Right ventricle myocardium superior (tissue), 1 donor: ENCODE measurements at regions of chr2 and their contacts with region 1.

Region 1: GRCh38 chr2:165293440-165294353 is 54.5 kb downstream of the SCN2A start:
- DNase-seq: no peak
- ATAC-seq: peak; percentile 99

Region 2: DNA sequence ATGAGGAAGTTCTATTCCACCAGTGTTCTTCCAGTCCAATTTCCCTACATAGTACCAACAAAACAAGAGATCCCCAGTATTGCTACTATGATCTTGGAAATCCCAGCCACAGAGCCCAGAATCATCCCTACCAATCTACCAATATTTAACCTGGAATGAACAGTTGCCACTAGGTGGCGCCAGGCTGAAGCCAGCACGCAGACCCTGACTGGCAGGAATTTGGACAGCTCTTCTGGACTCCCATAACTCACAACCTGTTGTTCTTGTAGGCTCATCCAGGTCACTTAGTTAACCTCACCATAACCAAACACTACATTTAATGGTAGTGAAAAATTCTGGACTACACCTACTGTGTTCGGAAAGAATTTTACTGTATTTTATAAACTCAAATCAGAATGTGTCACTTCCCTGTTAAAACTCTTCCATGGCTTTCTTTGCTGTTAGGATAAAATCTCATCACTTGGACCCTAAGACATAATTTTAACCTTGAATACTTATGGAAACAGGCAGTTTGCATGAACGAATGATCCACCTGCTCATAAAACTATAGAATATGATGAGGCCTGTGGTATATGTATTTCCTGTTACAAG is 278.6 kb before region 1 on chr2:
- intact Hi-C with region 1: loop called (anchors 10 kb)
- DNase-seq: peak; percentile 70
- ATAC-seq: peak; percentile 86

Region 3: GRCh38 chr2:165239856-165240515 is 53.7 kb before region 1 on chr2:
- intact Hi-C with region 1: loop called (anchors 5 kb)
- DNase-seq: no peak
- ATAC-seq: no peak